B cell (primary cell): ENCODE measurements at regions of chr14 and their contacts with region 1.

Region 1: DNA sequence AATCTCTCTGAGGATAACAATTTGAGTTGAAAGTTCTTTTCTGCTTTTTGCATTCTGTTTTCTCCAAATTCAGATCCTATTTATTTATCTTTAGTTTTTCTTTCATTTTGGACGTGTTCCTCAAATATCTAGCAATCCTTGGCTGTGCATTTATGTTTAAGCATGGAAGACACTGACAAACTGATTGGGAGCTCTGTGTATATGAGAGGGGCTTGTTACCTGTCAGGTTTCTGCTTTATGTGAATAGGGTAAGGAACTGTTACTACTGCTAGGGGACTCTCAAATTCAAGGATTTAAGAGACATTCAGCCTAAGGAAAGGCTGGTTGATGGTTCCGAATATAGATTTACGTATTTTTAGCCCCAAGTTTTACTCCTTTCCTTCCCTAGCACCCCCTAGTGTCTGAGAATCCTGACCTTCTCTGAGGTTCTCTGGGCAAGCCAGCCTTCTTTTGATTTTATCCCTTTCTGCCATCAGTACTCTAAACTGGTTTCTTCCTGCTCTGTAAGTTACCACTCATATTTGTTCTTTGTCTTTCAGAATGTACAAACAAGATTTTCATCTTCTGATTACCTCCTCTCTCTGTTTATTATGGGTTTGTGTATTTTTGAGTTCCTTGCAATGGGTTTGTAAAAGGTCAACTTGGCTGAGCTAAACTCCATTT is 30.5 kb downstream of the YLPM1 start:
- DNase-seq: peak; percentile 20
- ATAC-seq: no peak
- H3K4me3 ChIP-seq: peak overlapping the region in 1 of 5 experiments; percentile 44
- H3K4me3 Mint-ChIP-seq: peak overlapping the region; percentile 73
- H3K27ac ChIP-seq: peak overlapping the region in 1 of 2 donors; percentile 65
- H3K27ac Mint-ChIP-seq: peak overlapping the region; percentile 85
- H3K4me1 ChIP-seq: peaks cover 22 to 24% of the 10 kb centered on the region in 2 donors
- H3K4me1 Mint-ChIP-seq: peaks cover 37% of the 10 kb centered on the region
- H3K27me3 ChIP-seq: no peaks in the 10 kb centered on the region
- H3K27me3 Mint-ChIP-seq: no peaks in the 10 kb centered on the region
- CTCF ChIP-seq: no peak

Region 2: GRCh38 chr14:74684434-74684833 is 109.2 kb before region 1 on chr14:
- CTCF ChIA-PET with region 1: no interaction called
- POLR2A ChIA-PET with region 1: no interaction called
- intact Hi-C with region 1: loop called (anchors 10 kb)
- DNase-seq: peak; percentile 72
- ATAC-seq: peak; percentile 82
- H3K4me3 ChIP-seq: no peak overlapping the region
- H3K4me3 Mint-ChIP-seq: peak overlapping the region; percentile 59
- H3K27ac ChIP-seq: no peak overlapping the region
- H3K27ac Mint-ChIP-seq: peak overlapping the region; percentile 64
- H3K4me1 ChIP-seq: peaks cover 29% of the 10 kb centered on the region in 2 donors
- H3K4me1 Mint-ChIP-seq: peaks cover 27% of the 10 kb centered on the region
- H3K27me3 ChIP-seq: no peaks in the 10 kb centered on the region
- H3K27me3 Mint-ChIP-seq: no peaks in the 10 kb centered on the region
- CTCF ChIP-seq: no peak